ENCODE measurements at regions of chr19 and their contacts with region 1.

Region 1: DNA sequence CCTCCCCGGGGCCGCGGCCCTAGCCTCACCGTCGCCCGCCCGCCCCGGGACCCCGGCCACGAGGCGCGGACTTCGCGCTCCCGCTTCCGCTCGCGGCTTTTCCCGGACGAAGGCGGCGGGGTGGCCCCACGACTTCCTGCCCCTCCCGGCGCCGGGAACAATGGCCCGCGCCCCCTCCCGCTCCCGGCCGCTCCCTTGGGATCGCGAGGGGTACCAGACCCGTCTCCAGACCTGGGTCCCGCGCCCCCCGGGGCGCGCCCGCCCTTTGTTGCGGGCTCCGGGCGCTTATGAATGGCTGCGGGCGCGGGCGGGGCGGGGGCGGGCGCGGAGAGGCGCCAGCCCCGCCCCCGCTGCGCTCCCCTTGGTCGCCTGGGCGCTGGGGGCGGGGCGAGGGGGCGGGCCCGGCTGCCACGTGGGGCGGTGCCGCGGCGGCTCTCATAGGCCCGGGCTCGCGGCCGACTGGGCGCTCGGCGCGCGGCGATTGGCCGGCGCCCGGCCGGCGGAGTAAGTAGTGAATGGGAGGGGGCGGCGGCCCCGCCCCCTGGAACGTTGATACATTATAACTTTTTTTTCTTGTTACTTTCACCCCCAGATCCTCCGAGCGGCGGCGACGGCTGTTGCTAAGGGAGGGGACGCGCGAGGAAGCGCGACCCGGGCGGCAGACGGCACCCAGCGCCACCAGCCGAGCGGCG is 1.1 kb downstream of the MIDN start:
- DNase-seq: peak; percentile 89
- ATAC-seq: peak; percentile 45
- H3K4me3 ChIP-seq: peak overlapping the region; percentile 68 to 74
- H3K27ac ChIP-seq: peak overlapping the region; percentile 100
- H3K4me1 ChIP-seq: peaks cover 45 to 74% of the 10 kb centered on the region in 2 experiments
- H3K27me3 ChIP-seq: no peaks in the 10 kb centered on the region
- CTCF ChIP-seq: no peak
- POLR2A ChIP-seq: peak; percentile 43
- RAD21 ChIP-seq: no peak

Region 2: DNA sequence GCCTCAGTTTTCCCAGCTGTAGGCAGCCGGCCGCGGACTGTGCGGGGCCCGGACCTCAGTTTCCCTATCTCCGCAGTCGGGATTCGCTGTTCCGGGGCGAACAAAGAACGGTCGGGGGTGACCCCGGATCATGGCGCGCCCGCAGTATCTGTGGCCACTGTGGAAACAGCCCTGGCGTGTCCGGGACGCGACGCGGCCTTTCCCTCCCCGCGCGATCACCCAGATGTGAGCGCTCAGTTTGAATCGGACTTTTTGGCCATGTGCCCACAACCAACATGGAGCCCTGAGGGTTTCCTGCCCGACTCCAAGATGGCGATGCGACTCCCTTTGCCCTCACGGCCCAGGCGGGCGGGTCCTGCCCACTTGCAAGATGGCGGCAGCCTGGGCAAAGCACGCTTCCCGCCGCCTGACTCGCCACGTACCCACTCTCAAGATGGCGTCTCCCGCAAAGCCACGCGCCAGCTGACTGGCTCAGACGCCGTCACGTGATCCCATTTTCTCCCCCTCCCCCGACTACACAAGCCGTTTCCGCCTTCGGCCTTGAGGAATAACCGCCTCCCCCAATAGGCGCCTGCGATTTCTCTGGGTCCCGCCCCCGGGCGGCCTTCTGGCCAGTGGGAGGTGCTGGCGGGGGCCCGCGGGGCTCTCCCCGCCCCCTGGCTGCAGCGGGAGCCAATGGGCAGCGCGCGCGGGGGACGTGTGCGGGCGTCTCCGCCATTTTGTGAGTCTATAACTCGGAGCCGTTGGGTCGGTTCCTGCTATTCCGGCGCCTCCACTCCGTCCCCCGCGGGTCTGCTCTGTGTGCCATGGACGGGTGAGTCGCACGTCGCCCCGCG is 452.5 kb before region 1 on chr19 and contains the start of gene PTBP1:
- CTCF ChIA-PET with region 1: no interaction called
- POLR2A ChIA-PET with region 1: no interaction called
- RAD21 ChIA-PET with region 1: no interaction called
- intact Hi-C with region 1: loop called (anchors 10 kb)
- DNase-seq: peak; percentile 100
- ATAC-seq: peak; percentile 86
- H3K4me3 ChIP-seq: peak within 1 kb of the TSS; percentile 83 to 88
- H3K27ac ChIP-seq: peak within 1 kb of the TSS; percentile 96
- H3K4me1 ChIP-seq: peaks cover 17 to 36% of the 10 kb centered on the region in 2 experiments
- H3K27me3 ChIP-seq: no peaks in the 10 kb centered on the region
- CTCF ChIP-seq: peak in 1 of 3 experiments; percentile 16; a peak in 1 of 6 replicates
- POLR2A ChIP-seq: peak; percentile 61
- RAD21 ChIP-seq: no peak
- total RNA-seq, gene PTBP1: 676 TPM

Region 3: DNA sequence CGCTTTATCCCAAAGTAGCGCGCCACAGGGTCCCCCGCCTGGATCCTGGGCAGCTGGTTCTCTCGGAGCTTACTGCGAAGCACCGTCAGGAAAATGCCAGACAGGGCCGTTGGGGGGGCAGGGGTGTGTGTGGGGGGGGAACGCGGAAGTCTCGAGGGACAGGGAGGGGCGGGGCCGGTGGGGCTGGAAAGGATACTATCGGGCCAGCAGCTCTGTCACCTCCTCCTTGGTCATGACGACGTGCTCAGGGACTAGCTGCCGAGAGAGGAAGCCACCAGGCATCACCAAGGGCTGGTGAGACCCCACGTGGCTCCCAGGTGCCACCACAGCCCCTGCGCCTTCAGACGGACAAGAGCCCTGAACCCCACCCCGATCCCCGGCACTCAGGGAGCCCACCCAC is 159.6 kb before region 1 on chr19:
- CTCF ChIA-PET with region 1: no interaction called
- POLR2A ChIA-PET with region 1: no interaction called
- RAD21 ChIA-PET with region 1: no interaction called
- intact Hi-C with region 1: no loop called
- DNase-seq: no peak
- ATAC-seq: no peak
- H3K4me3 ChIP-seq: no peak overlapping the region
- H3K27ac ChIP-seq: no peak overlapping the region
- H3K4me1 ChIP-seq: peaks cover 7 to 12% of the 10 kb centered on the region in 2 experiments; a peak in 3 of 4 replicates
- H3K27me3 ChIP-seq: no peaks in the 10 kb centered on the region
- CTCF ChIP-seq: no peak
- POLR2A ChIP-seq: no peak
- RAD21 ChIP-seq: no peak